ENCODE measurements at regions of chr12 and their contacts with region 1.

Region 1: DNA sequence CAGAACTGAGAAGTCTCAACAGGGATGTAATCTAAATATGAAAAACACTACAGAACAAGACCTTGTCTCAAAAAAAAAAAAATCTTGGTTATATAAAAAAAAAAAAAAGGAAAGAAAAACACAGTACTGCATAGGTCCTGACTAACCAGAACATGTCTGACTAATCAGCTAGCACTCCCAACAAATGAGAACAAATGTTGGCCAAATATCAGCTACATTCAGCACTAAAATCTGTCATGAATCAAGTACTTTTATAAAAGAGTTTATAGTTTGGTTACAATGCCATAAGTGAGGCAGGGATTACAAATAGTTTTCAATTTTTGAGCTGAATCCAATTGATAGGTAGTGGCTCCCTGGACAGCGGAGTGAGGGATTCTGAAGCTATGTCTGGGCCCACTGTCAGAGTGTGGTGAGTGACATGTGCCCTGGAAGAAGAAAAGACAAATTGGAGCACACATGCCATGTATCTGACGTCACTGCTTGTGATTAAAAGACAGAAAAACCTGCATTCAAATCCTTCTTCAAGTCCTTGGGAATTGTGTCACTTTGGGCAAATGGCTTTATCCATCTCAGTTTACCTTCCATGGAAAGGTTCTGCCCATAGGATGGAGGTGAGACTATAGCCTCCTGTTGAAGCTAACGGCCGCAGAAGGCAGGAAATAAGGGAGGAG is 5.6 kb upstream of the FAM234B start:
- DNase-seq: no peak
- H3K4me3 ChIP-seq: no peak overlapping the region
- H3K27ac ChIP-seq: peak overlapping the region; percentile 85 to 97 (median 87)
- H3K4me1 ChIP-seq: peaks cover 42 to 53% of the 10 kb centered on the region in 2 donors
- H3K27me3 ChIP-seq: no peaks in the 10 kb centered on the region
- CTCF ChIP-seq: no peak
- POLR2A ChIP-seq: no peak

Region 2: GRCh38 chr12:13085968-13086686 is 47.5 kb after region 1 on chr12:
- intact Hi-C with region 1: loop called (anchors 10 kb)
- DNase-seq: no peak
- H3K4me3 ChIP-seq: no peak overlapping the region
- H3K27ac ChIP-seq: no peak overlapping the region
- H3K4me1 ChIP-seq: peaks cover 15 to 19% of the 10 kb centered on the region in 2 donors
- H3K27me3 ChIP-seq: no peaks in the 10 kb centered on the region
- CTCF ChIP-seq: no peak
- POLR2A ChIP-seq: no peak

Region 3: GRCh38 chr12:13114251-13115052 is 75.8 kb after region 1 on chr12:
- intact Hi-C with region 1: no loop called
- DNase-seq: peak; percentile 69 to 77
- H3K4me3 ChIP-seq: no peak overlapping the region
- H3K27ac ChIP-seq: peak overlapping the region; percentile 55 to 78 (median 61)
- H3K4me1 ChIP-seq: peaks cover 4 to 6% of the 10 kb centered on the region in 2 donors
- H3K27me3 ChIP-seq: no peaks in the 10 kb centered on the region
- CTCF ChIP-seq: no peak
- POLR2A ChIP-seq: no peak

Measured in thyroid gland (tissue), 4 donors.